Ovary (tissue), 10 donors: ENCODE measurements at regions of chr4 and their contacts with region 1.

Region 1: DNA sequence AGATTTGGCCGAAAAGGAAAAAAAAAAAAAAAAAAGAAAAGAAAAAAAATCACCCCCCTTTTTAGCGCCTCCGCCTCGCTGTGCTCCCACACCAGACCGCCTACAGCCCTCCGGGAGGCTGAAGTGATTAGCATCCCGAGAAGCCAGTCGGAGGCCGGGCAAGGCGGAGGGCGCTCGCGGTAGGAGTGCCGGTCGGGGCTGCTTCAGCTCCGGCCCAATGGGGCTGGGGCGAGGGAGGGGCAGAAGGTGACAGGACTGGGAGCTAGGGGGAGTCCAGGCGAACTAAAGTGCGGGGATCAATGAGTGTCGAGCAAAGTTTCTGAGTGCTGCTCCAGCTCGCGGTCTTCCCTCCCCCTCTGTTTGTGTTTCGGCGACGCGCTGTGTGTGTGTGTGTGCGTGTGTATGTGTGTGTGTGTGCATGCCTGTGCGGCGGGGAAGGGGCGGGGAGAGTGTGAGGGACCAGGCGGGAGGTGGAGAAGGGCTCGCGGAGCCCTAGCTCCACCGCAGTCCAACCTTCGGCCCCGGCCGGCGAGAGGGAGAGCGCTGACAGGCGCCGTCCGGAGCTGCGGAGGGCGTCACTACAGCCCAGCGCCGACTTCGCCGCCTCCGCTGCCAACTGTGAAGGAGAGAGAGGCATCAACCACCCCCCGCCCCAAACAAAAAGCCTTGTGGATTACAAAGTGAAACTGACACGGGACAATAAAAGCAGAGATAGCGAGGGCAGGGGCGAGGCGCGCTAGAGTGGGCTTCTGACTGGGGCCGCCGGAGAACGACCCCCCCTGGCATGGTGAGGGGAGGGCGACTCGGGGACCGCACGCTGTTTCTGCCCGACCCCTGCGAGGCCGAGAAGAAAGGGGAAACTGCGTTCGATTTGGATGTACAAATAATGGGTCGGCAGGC is at the start of gene FAT4:
- DNase-seq: peak; percentile 95 to 97 (median 97)
- H3K4me3 ChIP-seq: peak within 1 kb of the TSS; percentile 76
- H3K27ac ChIP-seq: peak within 1 kb of the TSS; percentile 87 to 92
- H3K4me1 ChIP-seq: peaks cover 11% of the 10 kb centered on the region
- H3K27me3 ChIP-seq: no peaks in the 10 kb centered on the region
- CTCF ChIP-seq: peak in 1 of 3 donors; percentile 38
- EP300 ChIP-seq: no peak
- POLR2A ChIP-seq: peak; percentile 57
- total RNA-seq, gene FAT4: 8.3 to 14.2 (median 11.0) TPM

Region 2: GRCh38 chr4:125105561-125105960 is 209.4 kb before region 1 on chr4:
- intact Hi-C with region 1: no loop called
- DNase-seq: no peak
- H3K4me3 ChIP-seq: no peak overlapping the region
- H3K27ac ChIP-seq: no peak overlapping the region
- H3K4me1 ChIP-seq: no peaks in the 10 kb centered on the region
- H3K27me3 ChIP-seq: no peaks in the 10 kb centered on the region
- CTCF ChIP-seq: no peak
- EP300 ChIP-seq: no peak
- POLR2A ChIP-seq: no peak

Region 3: DNA sequence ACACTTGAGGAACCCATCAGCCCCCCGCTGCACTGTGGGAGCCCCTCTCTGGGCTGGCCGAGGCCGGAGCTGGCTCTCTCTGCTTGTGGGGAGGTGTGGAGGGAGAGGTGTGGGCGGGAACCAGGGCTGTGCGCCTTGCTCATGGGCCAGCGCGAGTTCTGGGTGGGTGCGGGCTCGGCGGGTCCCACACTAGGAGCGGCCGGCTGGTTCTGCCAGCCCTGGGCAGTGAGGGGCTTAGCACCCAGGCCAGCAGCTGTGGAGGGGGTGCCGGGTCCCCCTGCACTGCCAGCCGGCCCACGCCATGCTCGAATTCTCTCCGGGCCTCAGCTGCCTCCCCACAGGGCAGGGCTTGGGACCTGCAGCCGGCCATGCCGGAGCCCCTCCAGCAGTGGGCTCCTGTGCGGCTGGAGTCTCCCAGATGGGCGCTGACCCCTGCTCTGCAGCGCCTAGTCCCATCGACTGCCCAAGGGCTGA is 430.0 kb after region 1 on chr4:
- intact Hi-C with region 1: loop called in 2 of 4 experiments (anchors 5 to 10 kb)
- DNase-seq: no peak
- H3K4me3 ChIP-seq: no peak overlapping the region
- H3K27ac ChIP-seq: no peak overlapping the region
- H3K4me1 ChIP-seq: no peaks in the 10 kb centered on the region
- H3K27me3 ChIP-seq: no peaks in the 10 kb centered on the region
- CTCF ChIP-seq: no peak
- EP300 ChIP-seq: no peak
- POLR2A ChIP-seq: no peak

Region 4: DNA sequence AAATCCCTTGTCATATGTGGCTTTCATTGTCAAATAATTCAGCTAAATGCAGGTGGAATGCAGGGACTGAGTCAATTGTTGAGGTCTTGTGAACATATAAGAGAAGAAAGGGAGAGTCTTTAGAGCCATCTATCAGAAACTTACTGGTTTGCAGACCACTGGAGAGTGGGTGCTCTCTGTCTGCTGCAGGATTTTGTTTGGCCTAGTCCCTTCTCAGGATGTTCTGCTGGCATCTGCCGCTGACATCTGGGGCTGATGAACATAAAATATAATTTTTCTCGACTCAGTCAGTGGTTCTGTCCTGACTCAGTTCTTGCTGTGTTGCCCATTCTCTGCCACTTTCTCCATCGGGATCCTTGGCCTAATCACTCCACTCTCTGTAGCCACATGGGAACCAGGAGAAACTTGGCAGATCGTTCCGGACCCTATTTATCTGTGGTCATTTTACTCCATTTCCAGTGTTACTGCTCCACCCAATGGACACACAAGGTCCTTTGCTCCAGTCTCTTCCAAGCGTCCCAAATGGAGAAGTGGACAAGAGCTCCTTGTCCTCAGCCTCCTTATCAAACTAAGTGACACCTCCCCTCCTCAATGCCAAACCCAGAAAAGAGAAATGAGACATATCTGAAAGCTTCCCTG is 436.0 kb after region 1 on chr4:
- intact Hi-C with region 1: loop called in 2 of 4 experiments (anchors 5 to 10 kb)
- DNase-seq: peak in 3 of 5 donors; percentile 13 to 29 (median 21)
- H3K4me3 ChIP-seq: no peak overlapping the region
- H3K27ac ChIP-seq: no peak overlapping the region
- H3K4me1 ChIP-seq: no peaks in the 10 kb centered on the region
- H3K27me3 ChIP-seq: no peaks in the 10 kb centered on the region
- CTCF ChIP-seq: peak in 1 of 3 donors; percentile 24
- EP300 ChIP-seq: no peak
- POLR2A ChIP-seq: no peak